ENCODE measurements at regions of chr12 and their contacts with region 1.

Region 1: GRCh38 chr12:27305673-27306456 is 26.8 kb upstream of the BMAL2 start:
- DNase-seq: no peak
- H3K4me3 Mint-ChIP-seq: no peak overlapping the region
- H3K27ac Mint-ChIP-seq: no peak overlapping the region
- H3K4me1 Mint-ChIP-seq: peaks cover 23% of the 10 kb centered on the region
- H3K27me3 Mint-ChIP-seq: no peaks in the 10 kb centered on the region

Region 2: GRCh38 chr12:27014085-27014858 is 291.6 kb before region 1 on chr12 and contains the start of gene TM7SF3:
- CTCF ChIA-PET with region 1: interaction called, 101 read pairs
- POLR2A ChIA-PET with region 1: interaction called, 24 read pairs
- DNase-seq: peak; percentile 96
- H3K4me3 Mint-ChIP-seq: peak within 1 kb of the TSS; percentile 90
- H3K27ac Mint-ChIP-seq: peak within 1 kb of the TSS; percentile 95
- H3K4me1 Mint-ChIP-seq: peaks cover 60% of the 10 kb centered on the region
- H3K27me3 Mint-ChIP-seq: no peaks in the 10 kb centered on the region
- total RNA-seq, gene TM7SF3: 33.6 to 35.7 TPM

Region 3: DNA sequence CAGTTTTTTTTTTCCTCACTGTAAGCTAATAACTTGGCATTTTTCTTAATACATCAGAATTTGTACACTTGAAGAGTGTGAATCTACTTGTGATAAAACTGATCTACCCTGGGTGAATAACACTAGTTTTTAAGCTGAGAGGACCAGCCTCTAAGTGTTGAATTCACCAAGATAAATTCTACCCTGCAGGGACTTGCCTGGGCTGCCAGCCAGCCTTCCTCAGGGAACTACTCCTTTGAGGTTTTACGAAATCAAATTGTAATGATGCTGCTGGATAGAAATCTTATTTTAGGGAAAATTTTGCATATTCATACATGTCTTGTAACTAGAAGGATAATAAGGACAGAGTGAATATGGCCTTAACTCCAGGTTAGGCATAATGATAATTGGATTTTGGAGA is 281.6 kb before region 1 on chr12:
- CTCF ChIA-PET with region 1: interaction called, 27 read pairs
- POLR2A ChIA-PET with region 1: interaction called, 15 read pairs
- DNase-seq: no peak
- H3K4me3 Mint-ChIP-seq: no peak overlapping the region
- H3K27ac Mint-ChIP-seq: no peak overlapping the region
- H3K4me1 Mint-ChIP-seq: peaks cover 36% of the 10 kb centered on the region
- H3K27me3 Mint-ChIP-seq: peaks cover 2% of the 10 kb centered on the region

Region 4: GRCh38 chr12:27034607-27035293 is 271.1 kb before region 1 on chr12:
- CTCF ChIA-PET with region 1: interaction called, 48 read pairs
- POLR2A ChIA-PET with region 1: no interaction called
- DNase-seq: no peak
- H3K4me3 Mint-ChIP-seq: no peak overlapping the region
- H3K27ac Mint-ChIP-seq: no peak overlapping the region
- H3K4me1 Mint-ChIP-seq: peaks cover 3% of the 10 kb centered on the region
- H3K27me3 Mint-ChIP-seq: no peaks in the 10 kb centered on the region

Region 5: DNA sequence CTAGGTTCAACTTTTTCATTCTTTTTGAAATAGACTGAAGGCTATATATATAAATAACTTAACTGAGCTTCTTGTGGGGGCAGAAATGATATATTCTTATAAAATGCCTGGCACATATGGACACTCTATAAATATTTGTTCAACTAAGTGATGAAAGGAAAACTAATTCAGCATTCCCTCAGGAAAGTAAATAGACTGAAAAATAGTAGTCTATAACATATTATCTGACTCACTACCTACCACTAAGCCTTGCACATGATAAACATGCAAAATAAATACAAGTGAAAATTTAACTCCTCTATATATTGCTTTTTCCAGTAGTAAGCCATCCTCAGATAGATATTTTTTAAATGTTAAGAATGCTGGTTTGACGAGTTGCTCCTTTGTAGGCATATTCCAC is 11.1 kb after region 1 on chr12:
- CTCF ChIA-PET with region 1: interaction called, 12 read pairs
- POLR2A ChIA-PET with region 1: no interaction called
- DNase-seq: no peak
- H3K4me3 Mint-ChIP-seq: no peak overlapping the region
- H3K27ac Mint-ChIP-seq: no peak overlapping the region
- H3K4me1 Mint-ChIP-seq: no peaks in the 10 kb centered on the region
- H3K27me3 Mint-ChIP-seq: no peaks in the 10 kb centered on the region

Region 6: DNA sequence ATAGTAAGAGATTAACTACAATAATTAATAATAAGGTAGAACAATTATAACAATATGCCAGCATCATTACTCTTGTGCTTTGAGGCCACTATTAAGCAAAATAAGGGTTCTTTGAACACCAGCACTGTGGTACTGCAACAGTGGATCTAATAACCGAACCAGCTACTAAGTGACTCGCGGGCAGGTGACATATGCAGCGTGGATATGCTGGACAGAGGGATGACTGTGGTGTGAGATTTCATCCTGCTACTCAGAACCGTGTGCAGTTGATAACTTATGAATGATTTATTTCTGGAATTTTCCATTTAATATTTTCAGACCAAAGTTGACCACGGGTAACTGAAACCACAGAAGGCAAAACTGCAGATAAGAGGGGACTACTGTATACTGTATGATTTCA is 61.2 kb after region 1 on chr12:
- CTCF ChIA-PET with region 1: no interaction called
- POLR2A ChIA-PET with region 1: no interaction called
- DNase-seq: no peak
- H3K4me3 Mint-ChIP-seq: no peak overlapping the region
- H3K27ac Mint-ChIP-seq: no peak overlapping the region
- H3K4me1 Mint-ChIP-seq: no peaks in the 10 kb centered on the region
- H3K27me3 Mint-ChIP-seq: peaks cover 6% of the 10 kb centered on the region